ENCODE measurements at regions of chrX and their contacts with region 1.

Region 1: GRCh38 chrX:34866646-34867045 is 76.0 kb upstream of the FAM47B start:
- DNase-seq: peak; percentile 41
- ATAC-seq: peak; percentile 74
- H3K4me3 ChIP-seq: no peak overlapping the region
- H3K27ac ChIP-seq: no peak overlapping the region
- H3K4me1 ChIP-seq: peaks cover 3% of the 10 kb centered on the region; the same call in 1 of the 2 replicates
- H3K27me3 ChIP-seq: no peaks in the 10 kb centered on the region
- CTCF ChIP-seq: no peak
- POLR2A ChIP-seq: no peak
- RAD21 ChIP-seq: no peak

Region 2: DNA sequence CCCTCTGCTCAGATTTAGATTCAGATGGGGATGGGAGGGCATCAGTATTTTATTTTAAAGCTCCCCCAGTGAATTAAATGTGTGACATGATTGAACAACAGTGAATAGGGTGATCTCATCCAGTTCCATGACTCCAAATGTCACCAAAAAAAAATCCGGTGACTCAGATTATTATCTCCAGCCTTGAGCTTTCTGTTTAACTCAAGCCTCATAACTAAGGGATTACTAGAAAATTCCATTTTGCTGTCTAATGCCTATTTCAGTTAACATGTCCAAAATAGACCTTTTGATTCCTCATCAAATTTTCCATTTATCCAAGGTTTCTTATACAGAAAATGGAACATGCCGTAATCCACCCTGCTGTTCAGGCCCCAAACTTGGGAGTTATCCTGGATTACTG is 87.7 kb before region 1 on chrX:
- CTCF ChIA-PET with region 1: no interaction called
- POLR2A ChIA-PET with region 1: no interaction called
- dilution Hi-C with region 1: no loop called
- in situ Hi-C with region 1: no loop called
- intact Hi-C with region 1: loop called (anchors 5 kb)
- DNase-seq: peak; percentile 86
- ATAC-seq: peak; percentile 91
- H3K4me3 ChIP-seq: no peak overlapping the region
- H3K27ac ChIP-seq: no peak overlapping the region
- H3K4me1 ChIP-seq: peaks cover 5% of the 10 kb centered on the region; the same call in 1 of the 2 replicates
- H3K27me3 ChIP-seq: no peaks in the 10 kb centered on the region
- CTCF ChIP-seq: no peak
- POLR2A ChIP-seq: no peak
- RAD21 ChIP-seq: no peak